AG04449 (cell line): ENCODE measurements at regions of chrX and their contacts with region 1.

Region 1: GRCh38 chrX:153507484-153508178 is 9.8 kb upstream of the ATP2B3 start:
- DNase-seq: no peak
- H3K4me3 ChIP-seq: no peak overlapping the region
- CTCF ChIP-seq: peak; percentile 81

Region 2: GRCh38 chrX:153032397-153033118 is 475.1 kb before region 1 on chrX:
- CTCF ChIA-PET with region 1: interaction called, 13 read pairs
- POLR2A ChIA-PET with region 1: no interaction called
- DNase-seq: no peak
- H3K4me3 ChIP-seq: peak overlapping the region; percentile 36
- CTCF ChIP-seq: peak; percentile 81

Region 3: DNA sequence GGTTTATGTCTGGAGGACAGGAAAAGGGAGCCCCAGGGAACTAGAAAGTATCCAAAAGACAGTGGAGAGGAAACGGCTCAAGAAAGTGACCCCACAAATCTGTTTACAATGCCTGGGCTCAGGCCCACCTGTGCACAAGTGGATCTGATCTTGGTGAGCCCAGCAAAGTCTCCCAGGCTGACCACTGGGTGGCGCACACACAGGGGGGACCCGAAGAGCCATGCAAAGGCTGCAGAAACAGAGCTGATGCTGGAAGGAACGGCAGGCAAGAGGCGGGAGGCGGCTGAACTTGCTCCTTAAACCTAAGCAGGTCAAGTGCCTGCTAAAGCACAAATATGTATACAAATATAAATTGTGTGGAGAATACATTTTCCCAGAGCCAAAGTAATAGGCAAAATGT is 46.8 kb before region 1 on chrX:
- CTCF ChIA-PET with region 1: interaction called, 71 read pairs
- POLR2A ChIA-PET with region 1: no interaction called
- DNase-seq: no peak
- H3K4me3 ChIP-seq: no peak overlapping the region
- CTCF ChIP-seq: peak; percentile 74

Region 4: GRCh38 chrX:153470435-153471363 is 36.9 kb before region 1 on chrX and contains the start of gene HAUS7:
- CTCF ChIA-PET with region 1: interaction called, 166 read pairs
- POLR2A ChIA-PET with region 1: interaction called, 20 read pairs
- DNase-seq: peak; percentile 19
- H3K4me3 ChIP-seq: peak within 1 kb of the TSS; percentile 65
- CTCF ChIP-seq: peak; percentile 91

Region 5: GRCh38 chrX:153488231-153488914 is 19.3 kb before region 1 on chrX:
- CTCF ChIA-PET with region 1: interaction called, 53 read pairs
- POLR2A ChIA-PET with region 1: no interaction called
- DNase-seq: no peak
- H3K4me3 ChIP-seq: no peak overlapping the region
- CTCF ChIP-seq: no peak

Region 6: GRCh38 chrX:153494541-153495361 is 12.9 kb before region 1 on chrX and contains the start of gene BGN:
- CTCF ChIA-PET with region 1: interaction called, 53 read pairs
- POLR2A ChIA-PET with region 1: interaction called, 4 read pairs
- DNase-seq: no peak
- H3K4me3 ChIP-seq: peak within 1 kb of the TSS; percentile 72
- CTCF ChIP-seq: peak; percentile 59

Region 7: GRCh38 chrX:153794018-153794896 is 286.6 kb after region 1 on chrX and contains the starts of genes IDH3G and SSR4:
- CTCF ChIA-PET with region 1: no interaction called
- POLR2A ChIA-PET with region 1: no interaction called
- DNase-seq: peak; percentile 59
- H3K4me3 ChIP-seq: peak within 1 kb of the TSS; percentile 84
- CTCF ChIP-seq: peak; percentile 38